Mammary epithelial cell (primary cell): ENCODE measurements at regions of chr7 and their contacts with region 1.

Region 1: DNA sequence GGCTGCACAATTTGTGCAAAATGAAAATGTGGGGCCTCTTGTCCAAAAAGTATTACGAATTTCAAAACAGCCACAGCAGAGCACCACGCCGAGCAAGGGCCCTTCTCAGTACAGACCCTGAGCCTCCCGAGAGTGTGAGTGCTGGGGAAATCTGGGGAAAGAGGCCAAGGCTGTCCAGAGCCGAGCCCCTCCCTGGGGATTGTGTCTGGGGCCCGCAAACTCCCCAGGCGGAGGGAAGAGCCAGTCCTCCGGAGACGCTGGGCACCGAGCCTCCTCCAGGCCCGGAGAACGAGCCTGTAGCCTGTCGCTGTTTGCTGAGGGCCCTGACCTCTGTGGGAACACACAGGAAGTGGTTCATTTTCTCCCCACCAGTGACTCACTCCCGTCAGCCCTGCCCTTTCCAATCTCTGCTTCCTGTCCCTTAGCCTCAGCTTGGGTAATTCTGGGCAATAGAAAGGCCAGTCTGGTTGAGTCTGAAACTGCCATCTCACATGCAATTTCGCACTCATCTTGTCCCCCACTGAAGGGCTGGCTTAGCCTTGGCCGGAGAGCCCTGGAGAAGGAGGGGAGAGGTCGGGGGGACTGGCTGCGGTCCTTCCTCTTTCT is 19.5 kb upstream of the GNA12 start:
- DNase-seq: peak; percentile 92
- H3K4me3 ChIP-seq: no peak overlapping the region
- H3K27ac ChIP-seq: peak overlapping the region; percentile 64
- H3K4me1 ChIP-seq: peaks cover 22% of the 10 kb centered on the region
- H3K27me3 ChIP-seq: no peaks in the 10 kb centered on the region
- CTCF ChIP-seq: no peak

Region 2: DNA sequence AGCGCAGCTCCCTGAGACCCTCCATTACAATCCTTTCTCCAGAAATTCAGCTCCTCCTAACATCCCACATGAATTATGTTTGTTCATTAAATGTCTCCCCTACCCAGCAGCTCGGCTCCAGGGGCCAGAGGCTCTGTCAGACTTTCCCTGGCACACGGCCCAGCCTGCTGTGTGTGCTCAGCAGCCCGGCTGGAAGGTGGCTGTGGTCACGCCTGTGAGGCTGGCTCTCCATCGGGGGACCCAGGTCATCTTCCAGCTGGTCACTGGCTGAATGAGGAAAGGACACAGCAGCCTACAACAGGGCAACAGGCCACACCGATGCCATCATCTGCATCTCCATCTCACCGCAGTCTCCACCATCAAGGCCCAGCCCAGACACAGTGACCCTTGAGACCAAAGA is 850.6 kb before region 1 on chr7:
- CTCF ChIA-PET with region 1: no interaction called
- dilution Hi-C with region 1: no loop called
- in situ Hi-C with region 1: no loop called
- intact Hi-C with region 1: no loop called
- DNase-seq: no peak
- H3K4me3 ChIP-seq: no peak overlapping the region
- H3K27ac ChIP-seq: no peak overlapping the region
- H3K4me1 ChIP-seq: peaks cover 11% of the 10 kb centered on the region
- H3K27me3 ChIP-seq: no peaks in the 10 kb centered on the region
- CTCF ChIP-seq: no peak

Region 3: DNA sequence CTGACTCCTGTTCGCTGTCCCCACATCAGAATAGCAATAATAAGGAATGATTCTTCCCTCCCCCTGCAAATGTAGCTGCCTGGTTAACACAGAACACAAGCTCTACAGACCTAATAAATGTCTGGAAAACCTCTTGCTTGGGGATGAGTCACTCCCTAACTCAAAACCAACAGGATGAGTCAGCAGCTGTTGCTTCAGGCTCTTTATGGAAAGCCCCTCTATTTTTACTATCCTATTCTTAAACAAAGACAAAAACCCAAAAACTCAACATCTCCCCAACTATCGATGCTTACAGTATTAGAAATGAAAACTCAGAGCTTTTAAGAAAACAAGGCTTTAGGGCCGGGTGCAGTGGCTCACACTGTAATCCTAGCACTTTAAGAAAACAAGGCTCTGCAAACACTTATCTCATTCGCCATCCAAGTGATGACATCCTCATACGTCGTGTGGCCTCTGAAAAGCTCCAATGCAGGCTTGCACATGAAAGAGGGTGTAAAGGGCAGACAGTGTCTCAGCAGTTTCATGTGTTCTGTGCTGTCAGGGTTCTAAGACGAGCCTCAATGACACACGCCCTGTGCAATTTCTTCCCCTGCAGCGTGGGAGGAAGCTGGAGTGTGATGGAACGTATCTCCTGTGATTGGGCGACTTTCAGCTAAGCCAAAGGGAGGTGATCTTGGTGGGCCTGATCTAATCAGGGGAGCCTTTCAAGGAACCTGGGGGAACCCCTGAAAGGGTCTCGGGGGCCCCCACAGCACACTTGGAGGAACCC is 105.5 kb before region 1 on chr7:
- CTCF ChIA-PET with region 1: no interaction called
- dilution Hi-C with region 1: no loop called
- in situ Hi-C with region 1: no loop called
- intact Hi-C with region 1: loop called (anchors 5 kb)
- DNase-seq: peak; percentile 97
- H3K4me3 ChIP-seq: peak overlapping the region in 1 of 3 experiments; percentile 19
- H3K27ac ChIP-seq: peak overlapping the region; percentile 88
- H3K4me1 ChIP-seq: peaks cover 37% of the 10 kb centered on the region
- H3K27me3 ChIP-seq: no peaks in the 10 kb centered on the region
- CTCF ChIP-seq: no peak

Region 4: DNA sequence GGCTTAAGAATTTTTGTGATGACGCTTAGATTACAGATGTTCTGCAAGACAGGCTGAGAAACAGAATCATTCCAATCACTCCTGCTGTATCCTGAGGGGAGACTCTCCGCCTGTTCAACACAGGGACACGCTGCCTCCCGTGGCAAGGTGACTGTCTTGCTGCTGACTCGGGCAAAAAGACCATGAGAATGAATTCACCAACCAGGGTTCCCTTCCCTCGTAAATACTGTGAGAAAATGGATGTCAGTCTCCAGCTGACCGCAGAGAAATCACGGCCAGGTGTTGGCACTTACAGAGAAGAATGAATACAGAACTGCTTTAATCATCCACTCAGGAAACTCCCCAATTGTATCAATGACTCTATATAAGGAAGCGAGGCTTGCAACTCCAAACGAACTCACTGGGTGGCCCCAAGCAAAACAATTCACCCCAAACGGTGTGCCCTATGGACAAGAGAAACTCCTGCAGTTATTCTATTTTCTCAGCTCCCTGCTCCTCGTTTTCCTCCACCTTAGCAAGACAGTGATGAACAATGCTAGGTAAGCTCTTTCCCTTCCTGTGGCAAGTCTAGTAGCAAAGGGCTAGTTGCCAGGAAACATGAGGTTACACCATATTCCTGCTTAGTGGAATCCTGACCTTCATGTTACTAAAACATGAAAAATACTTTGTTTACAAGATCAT is 42.3 kb before region 1 on chr7:
- CTCF ChIA-PET with region 1: no interaction called
- dilution Hi-C with region 1: no loop called
- in situ Hi-C with region 1: no loop called
- intact Hi-C with region 1: no loop called
- DNase-seq: peak; percentile 95
- H3K4me3 ChIP-seq: no peak overlapping the region
- H3K27ac ChIP-seq: peak overlapping the region; percentile 92
- H3K4me1 ChIP-seq: peaks cover 47% of the 10 kb centered on the region
- H3K27me3 ChIP-seq: no peaks in the 10 kb centered on the region
- CTCF ChIP-seq: peak; percentile 3 to 4

Region 5: GRCh38 chr7:2886900-2887299 is 23.3 kb after region 1 on chr7:
- CTCF ChIA-PET with region 1: no interaction called
- dilution Hi-C with region 1: no loop called
- in situ Hi-C with region 1: no loop called
- intact Hi-C with region 1: loop called (anchors 1 kb)
- DNase-seq: peak; percentile 68
- H3K4me3 ChIP-seq: no peak overlapping the region
- H3K27ac ChIP-seq: no peak overlapping the region
- H3K4me1 ChIP-seq: peaks cover 4% of the 10 kb centered on the region
- H3K27me3 ChIP-seq: peaks cover 3% of the 10 kb centered on the region
- CTCF ChIP-seq: peak; percentile 95

Region 6: DNA sequence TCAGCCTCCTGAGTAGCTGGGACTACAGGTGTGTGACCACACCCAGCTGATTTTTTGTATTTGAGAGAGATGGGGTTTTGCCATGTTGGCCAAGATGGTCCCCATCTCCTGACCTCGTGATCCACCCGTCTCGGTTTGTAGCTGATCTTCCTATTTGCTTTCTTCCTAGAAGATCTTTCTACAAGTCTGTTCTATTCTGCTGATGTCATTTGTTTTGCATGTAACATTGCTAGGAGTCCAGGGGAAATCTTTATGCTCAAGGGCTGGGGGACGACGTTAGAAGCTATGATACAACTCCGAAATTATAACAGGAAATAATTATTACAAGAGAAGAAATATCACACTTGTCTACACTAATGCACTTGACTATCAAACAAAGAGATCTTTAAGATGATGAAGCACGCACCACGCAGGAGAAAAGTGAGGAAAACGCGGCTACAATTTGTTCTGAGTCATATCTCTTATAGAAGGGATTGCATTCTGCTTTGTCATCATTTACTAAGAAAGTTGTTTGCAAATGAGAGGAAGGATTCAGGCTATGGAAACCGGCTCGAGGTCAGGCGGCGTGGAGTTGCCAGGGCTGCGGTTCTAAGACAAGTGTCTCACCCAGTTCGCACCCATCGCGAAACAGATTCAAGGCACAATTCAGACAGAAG is 283.1 kb after region 1 on chr7:
- CTCF ChIA-PET with region 1: interaction called, 15 read pairs
- dilution Hi-C with region 1: no loop called
- in situ Hi-C with region 1: no loop called
- intact Hi-C with region 1: no loop called
- DNase-seq: peak; percentile 2
- H3K4me3 ChIP-seq: no peak overlapping the region
- H3K27ac ChIP-seq: no peak overlapping the region
- H3K4me1 ChIP-seq: no peaks in the 10 kb centered on the region
- H3K27me3 ChIP-seq: no peaks in the 10 kb centered on the region
- CTCF ChIP-seq: no peak

Region 7: GRCh38 chr7:3897438-3898385 is 1034.1 kb after region 1 on chr7:
- CTCF ChIA-PET with region 1: no interaction called
- dilution Hi-C with region 1: no loop called
- in situ Hi-C with region 1: no loop called
- intact Hi-C with region 1: loop called (anchors 10 kb)
- DNase-seq: peak; percentile 19
- H3K4me3 ChIP-seq: no peak overlapping the region
- H3K27ac ChIP-seq: no peak overlapping the region
- H3K4me1 ChIP-seq: no peaks in the 10 kb centered on the region
- H3K27me3 ChIP-seq: no peaks in the 10 kb centered on the region
- CTCF ChIP-seq: peak; percentile 62 to 63

Region 8: DNA sequence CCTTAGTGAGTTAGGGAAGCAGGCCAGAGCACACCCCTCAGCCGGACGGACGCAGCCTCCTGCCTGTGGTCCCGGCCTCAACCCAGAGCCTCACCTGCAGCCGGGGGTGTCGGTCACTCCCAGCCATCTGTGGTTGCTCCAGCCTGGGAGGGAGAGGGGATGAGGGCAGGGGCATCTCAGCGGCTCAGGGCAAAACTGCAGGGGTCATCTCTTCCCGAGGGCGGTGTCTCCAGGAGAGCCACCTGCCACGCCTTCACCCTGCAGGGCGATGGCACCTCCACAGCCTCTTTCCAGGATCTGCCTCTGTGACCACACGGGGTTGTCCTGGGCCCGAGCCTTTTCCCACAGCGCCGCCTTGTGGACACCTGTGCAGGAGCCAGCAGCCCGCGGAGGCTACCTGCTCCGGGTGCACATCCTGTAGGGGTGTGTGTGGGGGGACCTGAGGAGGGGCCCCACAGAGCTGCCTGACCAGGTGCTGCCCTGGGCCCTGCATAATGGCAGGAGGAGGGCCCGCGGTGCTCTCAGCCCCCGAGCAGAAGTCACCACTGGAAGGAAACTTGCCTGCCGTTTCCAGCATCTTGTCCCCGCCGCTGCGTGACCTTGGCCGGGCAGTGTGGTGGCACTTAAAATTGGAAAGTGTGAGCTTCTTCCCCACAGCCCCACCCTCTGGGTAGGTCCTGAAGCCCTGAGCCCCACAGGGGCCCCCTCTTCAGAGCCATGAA is 1890.3 kb after region 1 on chr7:
- CTCF ChIA-PET with region 1: no interaction called
- dilution Hi-C with region 1: no loop called
- in situ Hi-C with region 1: loop called in 1 of 2 experiments (anchors 25 kb)
- intact Hi-C with region 1: no loop called
- DNase-seq: peak; percentile 59
- H3K4me3 ChIP-seq: no peak overlapping the region
- H3K27ac ChIP-seq: no peak overlapping the region
- H3K4me1 ChIP-seq: no peaks in the 10 kb centered on the region
- H3K27me3 ChIP-seq: no peaks in the 10 kb centered on the region
- CTCF ChIP-seq: peak; percentile 84 to 95